Activated CD4-positive, alpha-beta memory T cell treated with anti-CD3 and anti-CD28 coated beads, Interleukin-2, amount 10 ng/mL, durations not matched to agents 7 days and 5 days (primary cell): ENCODE measurements at regions of chr11 and their contacts with region 1.

Region 1: DNA sequence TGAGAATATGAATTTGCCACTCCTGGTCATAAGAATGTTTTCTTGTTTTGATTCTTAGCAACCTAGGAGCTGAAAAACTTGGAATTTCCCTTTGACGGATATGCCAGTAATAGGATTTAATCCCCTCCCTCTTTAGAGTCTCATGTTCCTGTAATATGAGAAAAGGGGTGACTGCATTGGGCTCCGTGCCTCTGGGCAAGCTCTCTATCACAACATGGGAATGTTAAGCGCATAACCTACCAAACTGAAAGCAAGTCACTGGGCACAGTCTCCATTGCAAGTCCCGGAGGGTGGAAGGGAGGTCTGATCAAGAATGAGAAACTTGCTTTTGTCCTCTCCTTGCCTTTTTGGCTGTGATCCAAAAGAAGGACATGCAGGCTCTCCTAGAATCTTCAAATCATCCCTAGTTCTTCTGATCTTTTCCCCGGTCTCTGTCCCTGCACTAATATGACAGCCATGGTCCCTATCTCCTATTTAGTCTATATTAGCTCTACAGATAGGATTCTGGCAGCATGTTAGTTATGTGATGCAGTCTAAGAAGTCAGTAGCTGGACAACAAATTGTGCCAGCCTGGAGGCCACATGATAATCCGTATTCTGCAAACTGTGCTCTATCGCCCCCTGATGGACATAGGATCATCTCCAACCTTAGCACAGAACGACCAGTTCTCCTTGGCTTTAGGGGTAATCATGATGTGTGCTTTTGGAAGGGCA is 11.7 kb downstream of the OR10D3 start:
- DNase-seq: peak; percentile 50
- H3K4me3 Mint-ChIP-seq: no peak overlapping the region
- H3K27ac Mint-ChIP-seq: no peak overlapping the region
- H3K4me1 Mint-ChIP-seq: no peaks in the 10 kb centered on the region
- H3K27me3 Mint-ChIP-seq: peaks cover 1% of the 10 kb centered on the region

Region 2: DNA sequence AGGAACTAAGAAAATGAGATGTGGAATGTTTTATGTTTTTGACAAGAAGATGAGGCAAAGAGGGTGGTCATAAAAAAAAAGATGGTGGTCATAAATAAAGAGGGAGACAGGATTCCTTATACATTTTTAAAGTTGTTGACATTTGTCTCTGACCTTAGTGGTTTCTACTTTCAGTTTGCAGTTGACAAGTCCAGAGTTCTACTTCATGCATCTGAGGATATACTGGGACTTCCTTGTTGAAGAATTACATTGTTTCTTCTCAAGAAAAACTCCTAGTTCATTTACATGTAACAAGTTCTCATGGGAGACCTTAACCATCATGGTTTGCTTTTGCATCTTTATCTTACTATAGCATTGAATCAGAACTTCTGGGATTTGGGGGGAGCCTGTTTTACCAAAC is 441.7 kb before region 1 on chr11:
- CTCF ChIA-PET with region 1: no interaction called
- POLR2A ChIA-PET with region 1: no interaction called
- DNase-seq: no peak
- H3K4me3 Mint-ChIP-seq: no peak overlapping the region
- H3K27ac Mint-ChIP-seq: no peak overlapping the region
- H3K4me1 Mint-ChIP-seq: peaks cover 37% of the 10 kb centered on the region
- H3K27me3 Mint-ChIP-seq: peaks cover 23% of the 10 kb centered on the region

Region 3: GRCh38 chr11:124070915-124071635 is 123.8 kb before region 1 on chr11:
- CTCF ChIA-PET with region 1: interaction called, 84 read pairs
- POLR2A ChIA-PET with region 1: no interaction called
- DNase-seq: peak; percentile 73
- H3K4me3 Mint-ChIP-seq: no peak overlapping the region
- H3K27ac Mint-ChIP-seq: no peak overlapping the region
- H3K4me1 Mint-ChIP-seq: peaks cover 8% of the 10 kb centered on the region
- H3K27me3 Mint-ChIP-seq: peaks cover 14% of the 10 kb centered on the region